ENCODE measurements at regions of chr9 and their contacts with region 1.

Region 1: DNA sequence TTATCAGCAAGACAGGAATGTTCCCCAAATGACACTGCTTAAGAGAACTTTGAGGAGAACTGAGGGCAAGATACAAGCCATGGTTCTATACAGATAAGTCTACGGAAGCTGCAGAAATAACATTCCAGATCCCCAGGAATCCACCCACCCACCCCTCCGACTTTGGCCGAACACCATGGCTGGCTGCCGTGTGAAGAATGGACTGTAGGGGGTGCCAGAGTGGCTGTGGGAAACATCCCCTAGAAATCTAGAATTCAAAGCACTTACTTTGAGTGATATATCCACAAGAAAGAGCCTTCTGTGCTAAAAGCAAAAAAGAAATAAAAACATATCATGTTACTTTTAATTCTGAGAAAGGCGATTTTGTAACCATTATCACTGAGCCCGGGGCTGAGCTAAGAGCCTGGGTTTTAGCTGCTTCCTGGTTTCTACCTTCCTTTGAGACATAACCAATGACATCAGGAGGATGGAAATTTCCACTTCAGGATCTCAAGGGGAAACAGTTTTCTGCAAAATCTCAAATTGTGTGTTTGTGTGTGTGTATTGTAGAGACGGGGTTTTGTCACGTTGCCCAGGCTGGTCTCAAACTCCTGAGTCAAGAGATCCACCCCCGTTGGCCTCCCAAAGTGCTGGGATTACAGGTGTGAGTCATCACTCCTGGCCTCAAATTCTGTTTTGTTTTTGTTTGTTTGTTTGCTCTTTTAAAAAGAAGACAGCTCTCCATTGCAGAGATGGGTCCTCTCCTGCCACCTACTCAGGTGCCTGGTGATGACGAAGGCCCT is 36.4 kb downstream of the GGTA1 start:
- H3K4me3 Mint-ChIP-seq: no peak overlapping the region
- H3K27ac Mint-ChIP-seq: no peak overlapping the region
- H3K4me1 Mint-ChIP-seq: peaks cover 31% of the 10 kb centered on the region
- H3K27me3 Mint-ChIP-seq: no peaks in the 10 kb centered on the region

Region 2: DNA sequence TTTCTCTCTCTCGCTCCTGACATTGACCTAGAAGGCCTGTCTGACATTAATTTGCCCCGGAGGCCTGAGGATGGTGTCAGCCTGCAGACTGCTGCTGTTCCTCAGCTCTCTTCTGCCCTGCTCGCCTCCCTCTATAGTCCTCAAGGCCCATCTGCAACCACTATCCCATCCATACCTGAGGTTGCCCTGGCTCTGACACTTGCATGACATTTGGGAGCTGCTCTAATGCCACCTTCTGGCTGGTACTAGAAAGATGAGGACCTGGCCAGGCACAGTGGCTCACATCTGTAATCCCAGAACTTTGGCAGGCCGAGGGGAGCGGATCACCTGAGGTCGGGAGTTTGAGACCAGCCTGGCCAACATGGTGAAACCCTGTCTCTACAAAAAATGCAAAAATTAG is 75.0 kb after region 1 on chr9:
- intact Hi-C with region 1: loop called (anchors 1 kb)
- H3K4me3 Mint-ChIP-seq: no peak overlapping the region
- H3K27ac Mint-ChIP-seq: no peak overlapping the region
- H3K4me1 Mint-ChIP-seq: peaks cover 23% of the 10 kb centered on the region
- H3K27me3 Mint-ChIP-seq: peaks cover 17% of the 10 kb centered on the region

Measured in dendritic cell treated with granulocyte-macrophage colony-stimulating factor and Interleukin-4, amounts not matched to agents 40 ng/mL and 50 ng/mL, for 4 days (primary cell).